ENCODE measurements at regions of chr5 and their contacts with region 1.

Region 1: DNA sequence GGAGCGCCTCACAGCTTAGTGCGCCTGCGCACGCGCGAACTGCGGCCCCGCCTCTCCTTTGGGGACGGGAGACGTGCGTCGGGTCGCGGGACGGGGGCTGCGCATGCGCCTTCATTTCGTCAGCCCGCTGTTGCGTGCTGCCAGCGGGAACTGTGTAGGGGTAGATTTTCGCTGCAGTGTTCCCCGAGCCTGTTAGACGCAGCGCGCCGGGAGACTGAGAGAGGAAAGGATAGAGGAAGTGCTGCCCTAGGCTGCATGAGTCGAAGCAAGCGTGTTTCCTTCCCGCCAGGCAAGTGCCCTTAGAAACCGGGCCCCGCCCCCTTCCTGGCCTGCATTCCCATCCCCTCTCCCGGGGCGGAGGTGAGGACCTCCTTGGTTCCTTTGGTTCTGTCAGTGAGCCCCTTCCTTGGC is 12.3 kb downstream of the ITGA1 start:
- DNase-seq: peak; percentile 95
- H3K4me3 Mint-ChIP-seq: peak overlapping the region; percentile 90
- H3K27ac Mint-ChIP-seq: peak overlapping the region; percentile 88
- H3K4me1 Mint-ChIP-seq: peaks cover 58% of the 10 kb centered on the region
- H3K27me3 Mint-ChIP-seq: peaks cover 3% of the 10 kb centered on the region

Region 2: GRCh38 chr5:52693280-52693679 is 106.7 kb before region 1 on chr5:
- intact Hi-C with region 1: loop called (anchors 1 kb)
- DNase-seq: no peak
- H3K4me3 Mint-ChIP-seq: no peak overlapping the region
- H3K27ac Mint-ChIP-seq: no peak overlapping the region
- H3K4me1 Mint-ChIP-seq: peaks cover 24% of the 10 kb centered on the region
- H3K27me3 Mint-ChIP-seq: peaks cover 16% of the 10 kb centered on the region

Region 3: GRCh38 chr5:52725065-52725746 is 74.8 kb before region 1 on chr5:
- intact Hi-C with region 1: loop called (anchors 1 kb)
- DNase-seq: peak; percentile 69
- H3K4me3 Mint-ChIP-seq: peak overlapping the region; percentile 78
- H3K27ac Mint-ChIP-seq: peak overlapping the region; percentile 85
- H3K4me1 Mint-ChIP-seq: peaks cover 61% of the 10 kb centered on the region
- H3K27me3 Mint-ChIP-seq: no peaks in the 10 kb centered on the region

Region 4: DNA sequence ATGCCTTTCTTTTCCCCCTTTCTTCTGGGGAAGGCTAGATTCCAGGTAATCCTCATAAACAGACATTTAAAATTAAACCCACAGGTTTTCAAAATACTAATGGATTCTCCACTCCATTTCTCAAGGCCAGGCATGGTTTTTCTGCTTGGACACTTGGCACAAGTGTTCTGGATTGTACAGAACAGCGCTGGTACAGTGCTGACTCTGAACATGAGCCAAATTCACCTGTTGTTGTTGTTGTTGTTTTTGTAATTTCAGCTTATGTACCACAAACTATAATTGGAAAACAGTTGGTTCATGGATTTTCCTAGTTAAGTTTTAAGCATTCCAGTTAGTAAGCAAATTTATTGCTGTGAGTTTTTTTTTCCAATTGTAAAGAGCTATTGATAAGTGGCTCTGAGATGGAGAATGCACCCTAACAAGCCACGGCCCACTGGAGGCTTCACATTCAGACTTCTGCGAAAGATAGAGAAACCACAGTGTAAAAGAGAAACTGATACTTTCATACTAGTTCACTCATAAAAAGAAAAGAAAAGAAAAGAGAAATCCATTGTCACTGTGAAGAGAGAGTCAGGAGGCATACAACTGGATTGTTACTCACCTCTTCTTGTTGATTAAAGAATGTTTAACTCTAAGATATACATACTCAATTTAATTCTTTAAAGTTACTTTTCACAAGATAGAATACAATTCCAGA is 28.5 kb before region 1 on chr5:
- intact Hi-C with region 1: loop called (anchors 1 kb)
- DNase-seq: peak; percentile 37
- H3K4me3 Mint-ChIP-seq: peak overlapping the region; percentile 3
- H3K27ac Mint-ChIP-seq: peak overlapping the region; percentile 61
- H3K4me1 Mint-ChIP-seq: peaks cover 81% of the 10 kb centered on the region
- H3K27me3 Mint-ChIP-seq: peaks cover 5% of the 10 kb centered on the region

Region 5: DNA sequence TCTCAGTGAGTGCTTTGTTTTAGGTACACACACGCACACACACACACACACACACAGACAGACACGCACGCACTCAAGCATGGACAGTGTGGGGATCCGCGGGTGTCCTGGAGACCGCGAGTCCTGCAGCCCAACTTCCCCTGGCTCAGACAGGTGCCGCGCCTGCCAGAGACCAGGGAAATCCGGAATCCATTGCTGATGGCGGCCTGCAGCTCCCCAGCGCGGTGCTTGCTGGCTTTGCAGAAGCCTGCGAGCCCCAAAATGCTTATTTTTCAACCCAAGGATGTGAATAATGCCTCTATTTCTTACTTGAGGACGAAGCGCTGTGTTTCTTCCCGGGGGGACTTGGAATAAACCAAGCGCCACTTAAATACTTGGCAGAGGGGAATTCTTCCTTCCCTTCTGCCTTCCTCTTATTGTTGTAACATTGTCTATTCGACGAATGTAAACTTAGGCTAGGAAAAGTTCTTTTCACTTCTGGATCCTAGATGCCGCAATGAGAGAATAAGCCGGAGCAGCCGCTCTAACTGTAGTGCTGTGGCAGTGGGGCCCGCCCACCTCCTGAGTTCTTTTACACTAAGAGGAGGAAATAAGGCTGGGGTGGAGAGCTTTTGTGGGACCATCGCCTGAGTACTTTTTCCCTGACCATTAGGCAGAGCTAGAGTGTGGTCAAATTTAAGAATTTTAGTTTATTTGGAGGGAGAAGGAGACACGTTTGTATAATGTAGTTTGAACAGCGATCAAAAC is 190.0 kb after region 1 on chr5:
- intact Hi-C with region 1: loop called (anchors 5 kb)
- DNase-seq: peak; percentile 21
- H3K4me3 Mint-ChIP-seq: peak overlapping the region; percentile 83
- H3K27ac Mint-ChIP-seq: peak overlapping the region; percentile 45
- H3K4me1 Mint-ChIP-seq: peaks cover 34% of the 10 kb centered on the region
- H3K27me3 Mint-ChIP-seq: peaks cover 2% of the 10 kb centered on the region